B cell (primary cell): ENCODE measurements at regions of chr19 and their contacts with region 1.

Region 1: DNA sequence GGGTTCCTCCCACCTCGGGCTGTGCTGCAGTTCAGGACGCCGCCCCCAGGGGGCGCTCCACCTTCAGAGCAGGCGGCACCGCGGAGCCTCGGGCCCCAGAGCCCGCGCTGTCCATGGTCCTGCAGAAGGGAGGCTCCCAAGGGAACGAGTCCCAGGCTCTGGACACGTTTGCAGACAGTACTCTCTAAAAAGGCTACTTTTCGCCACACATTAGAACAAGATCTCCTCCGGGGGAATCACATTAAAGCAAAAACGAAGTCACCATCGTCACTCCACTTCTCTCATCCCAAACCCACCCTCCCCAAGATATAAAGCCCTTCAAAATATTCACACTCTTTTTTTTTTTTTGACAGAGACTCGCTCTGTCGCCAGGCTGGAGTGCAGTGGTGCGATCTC is 4.6 kb upstream of the SIGLEC10 start:
- DNase-seq: peak; percentile 87
- ATAC-seq: peak; percentile 39
- H3K4me3 ChIP-seq: no peak overlapping the region
- H3K4me3 Mint-ChIP-seq: peak overlapping the region; percentile 39
- H3K27ac ChIP-seq: no peak overlapping the region
- H3K27ac Mint-ChIP-seq: no peak overlapping the region
- H3K4me1 ChIP-seq: peaks cover 19 to 33% of the 10 kb centered on the region in 2 donors
- H3K4me1 Mint-ChIP-seq: peaks cover 29% of the 10 kb centered on the region
- H3K27me3 ChIP-seq: peaks cover 0 to 15% (median 3%) of the 10 kb centered on the region in 4 experiments
- H3K27me3 Mint-ChIP-seq: peaks cover 10% of the 10 kb centered on the region
- CTCF ChIP-seq: peak; percentile 99

Region 2: DNA sequence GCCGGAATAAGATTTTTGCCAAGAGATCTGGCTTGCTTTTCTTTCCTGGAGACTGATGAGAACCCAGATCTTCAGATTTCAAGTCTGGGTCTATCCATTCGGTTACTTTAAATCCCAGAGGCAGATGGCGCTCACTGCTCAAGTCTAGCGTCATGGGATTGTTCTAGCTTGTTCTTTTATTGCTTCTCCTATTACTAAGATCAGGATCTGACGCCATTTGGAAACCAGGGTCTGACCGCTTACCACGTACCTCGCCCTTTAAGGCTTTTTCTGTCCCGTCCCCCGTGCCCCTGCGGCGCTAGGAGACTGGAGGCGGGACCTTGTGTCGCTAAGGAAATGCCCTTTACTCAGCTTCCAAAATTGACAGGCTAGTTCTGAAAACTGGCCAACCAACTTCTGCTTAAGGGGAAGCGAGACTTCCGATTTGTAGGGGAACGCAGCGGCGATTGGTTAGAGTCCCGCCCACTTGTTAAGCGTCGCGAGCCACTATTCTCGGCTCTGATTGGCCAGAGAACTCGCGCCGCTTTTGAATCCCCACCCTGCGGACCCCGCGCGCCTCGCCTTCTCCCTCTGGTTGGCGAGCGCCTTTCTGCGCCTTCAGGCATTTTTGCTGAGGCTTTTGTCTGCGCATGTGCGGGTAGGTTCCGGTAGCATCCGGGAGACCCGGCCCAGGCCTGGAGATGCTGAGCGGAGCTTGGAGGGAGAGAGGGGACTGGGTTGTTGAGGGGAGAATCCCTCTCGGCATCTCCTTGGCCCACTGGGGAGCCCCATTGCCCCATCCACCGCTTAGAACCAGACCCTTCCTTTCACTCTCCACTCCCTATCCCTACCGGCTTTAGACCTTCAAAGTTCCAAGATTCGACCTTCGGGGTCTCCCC is 27.9 kb before region 1 on chr19:
- CTCF ChIA-PET with region 1: interaction called, 46 read pairs
- POLR2A ChIA-PET with region 1: interaction called, 13 read pairs
- intact Hi-C with region 1: loop called (anchors 1 kb)
- DNase-seq: peak; percentile 95
- ATAC-seq: peak; percentile 92
- H3K4me3 ChIP-seq: peak overlapping the region; percentile 43 to 74 (median 62)
- H3K4me3 Mint-ChIP-seq: peak overlapping the region; percentile 85
- H3K27ac ChIP-seq: peak overlapping the region; percentile 63 to 73
- H3K27ac Mint-ChIP-seq: peak overlapping the region; percentile 78
- H3K4me1 ChIP-seq: peaks cover 22 to 33% of the 10 kb centered on the region in 2 donors
- H3K4me1 Mint-ChIP-seq: peaks cover 30% of the 10 kb centered on the region
- H3K27me3 ChIP-seq: peaks cover 0 to 4% (median 0%) of the 10 kb centered on the region in 4 experiments
- H3K27me3 Mint-ChIP-seq: no peaks in the 10 kb centered on the region
- CTCF ChIP-seq: peak; percentile 13

Region 3: DNA sequence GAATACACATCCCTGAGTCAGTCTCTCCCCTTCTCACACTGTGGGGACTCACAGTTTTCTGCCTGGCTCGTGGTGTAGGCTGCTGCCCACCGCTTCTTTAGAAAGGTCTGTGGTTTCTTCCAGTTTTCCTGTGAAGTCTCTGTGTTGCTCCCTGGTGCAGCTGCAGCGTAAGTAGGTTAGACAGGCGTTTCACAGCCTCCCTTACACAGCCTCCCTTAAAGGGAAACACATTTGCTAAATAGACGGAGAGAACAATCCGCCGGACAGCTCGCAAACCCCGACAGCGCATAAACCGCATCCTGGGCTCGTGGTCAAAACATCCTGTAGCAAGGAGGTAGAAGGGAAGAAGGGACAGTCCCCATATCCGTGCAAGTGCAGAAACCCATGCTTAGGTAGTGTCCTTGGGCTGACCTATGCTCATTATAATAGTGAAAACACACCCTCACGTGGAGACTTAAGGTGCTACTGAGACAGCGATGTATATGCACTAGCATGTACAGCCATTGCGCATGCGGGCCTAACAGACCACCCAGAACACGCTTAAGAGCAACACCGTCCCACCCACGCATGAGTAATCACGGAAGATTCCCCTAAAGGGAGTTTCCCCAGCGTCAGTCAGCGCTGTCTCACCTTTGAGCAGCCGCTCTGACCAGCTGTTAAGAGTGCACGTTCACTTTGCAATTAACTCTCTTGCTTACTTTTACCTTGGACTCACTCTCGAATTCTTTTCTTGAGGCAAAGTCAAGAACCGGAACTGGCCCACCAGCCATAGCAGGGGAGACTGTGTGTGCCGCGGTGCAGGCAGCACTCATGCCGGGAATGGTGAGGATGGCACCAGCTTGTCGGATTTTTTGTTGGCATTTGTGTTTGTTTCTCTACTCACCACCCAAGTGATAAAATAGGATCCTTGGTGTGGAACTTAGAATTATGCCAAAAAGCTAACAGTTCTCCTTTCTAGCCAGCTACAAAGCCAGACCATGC is 19.6 kb after region 1 on chr19:
- CTCF ChIA-PET with region 1: interaction called, 112 read pairs
- POLR2A ChIA-PET with region 1: interaction called, 3 read pairs
- intact Hi-C with region 1: loop called (anchors 1 kb)
- DNase-seq: peak; percentile 88
- ATAC-seq: peak; percentile 89
- H3K4me3 ChIP-seq: peak overlapping the region; percentile 5 to 41 (median 37)
- H3K4me3 Mint-ChIP-seq: peak overlapping the region; percentile 71
- H3K27ac ChIP-seq: peak overlapping the region; percentile 61 to 71
- H3K27ac Mint-ChIP-seq: peak overlapping the region; percentile 83
- H3K4me1 ChIP-seq: peaks cover 20 to 32% of the 10 kb centered on the region in 2 donors
- H3K4me1 Mint-ChIP-seq: peaks cover 32% of the 10 kb centered on the region
- H3K27me3 ChIP-seq: peaks cover 0 to 15% (median 3%) of the 10 kb centered on the region in 4 experiments
- H3K27me3 Mint-ChIP-seq: peaks cover 20% of the 10 kb centered on the region
- CTCF ChIP-seq: peak; percentile 22

Region 4: DNA sequence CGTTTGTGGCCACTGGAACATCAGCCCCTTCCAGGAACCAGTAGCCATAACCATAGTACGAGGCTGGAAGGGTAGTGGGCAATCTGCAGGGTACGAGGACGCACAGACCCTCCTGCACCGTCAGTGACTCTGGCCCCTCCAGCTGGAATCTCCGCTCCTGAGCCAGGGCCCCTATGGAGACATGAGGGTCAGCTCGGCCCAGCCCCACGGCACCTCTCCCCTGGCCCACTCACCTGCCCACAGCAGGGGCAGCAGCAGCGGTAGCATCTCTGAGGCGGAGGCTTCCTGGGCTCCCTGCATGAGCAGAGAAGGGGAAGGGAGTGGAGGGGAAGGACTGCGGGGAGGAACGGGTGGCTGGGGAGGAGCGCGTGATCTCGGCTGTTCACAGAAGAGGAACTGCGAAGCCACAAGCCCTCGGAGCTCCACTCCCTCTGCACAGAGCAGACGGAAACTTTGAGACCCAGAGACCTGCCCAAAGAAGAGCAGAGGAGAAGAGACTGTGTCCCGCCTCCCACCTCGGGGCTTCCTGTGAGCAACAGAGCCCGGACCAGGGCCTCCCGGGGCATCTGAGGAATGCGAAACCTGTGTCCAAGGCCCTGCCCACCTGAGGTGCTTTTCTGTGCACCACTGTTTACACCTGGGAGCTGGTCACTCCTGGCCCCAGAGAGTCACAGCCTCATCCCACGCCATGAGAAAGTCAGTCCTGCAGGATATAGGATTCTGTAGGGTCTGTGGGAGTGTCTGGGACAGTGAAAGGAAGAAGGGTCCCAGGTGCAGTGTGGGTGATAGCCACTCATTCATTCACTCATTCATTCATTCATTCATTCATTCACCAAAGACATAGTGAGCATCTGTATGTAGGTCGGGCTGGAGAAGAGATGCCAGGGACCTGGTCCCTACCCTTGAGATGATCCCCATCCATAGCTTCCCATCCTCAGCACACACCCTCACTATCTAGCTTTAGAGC is 109.6 kb after region 1 on chr19 and contains the start of gene SIGLEC6:
- CTCF ChIA-PET with region 1: interaction called, 3 read pairs
- POLR2A ChIA-PET with region 1: interaction called, 3 read pairs
- intact Hi-C with region 1: loop called (anchors 5 kb)
- DNase-seq: peak; percentile 88
- ATAC-seq: peak; percentile 96
- H3K4me3 ChIP-seq: peak within 1 kb of the TSS in 4 of 5 experiments; percentile 51 to 60 (median 56)
- H3K4me3 Mint-ChIP-seq: peak within 1 kb of the TSS; percentile 88
- H3K27ac ChIP-seq: peak within 1 kb of the TSS; percentile 32 to 33
- H3K27ac Mint-ChIP-seq: peak within 1 kb of the TSS; percentile 83
- H3K4me1 ChIP-seq: peaks cover 25 to 41% of the 10 kb centered on the region in 2 donors
- H3K4me1 Mint-ChIP-seq: peaks cover 78% of the 10 kb centered on the region
- H3K27me3 ChIP-seq: no peaks in the 10 kb centered on the region
- H3K27me3 Mint-ChIP-seq: no peaks in the 10 kb centered on the region
- CTCF ChIP-seq: no peak
- total RNA-seq, gene SIGLEC6: 21.2 and 28.9 TPM in 2 replicates